ENCODE measurements at regions of chr16 and their contacts with region 1.

Region 1: DNA sequence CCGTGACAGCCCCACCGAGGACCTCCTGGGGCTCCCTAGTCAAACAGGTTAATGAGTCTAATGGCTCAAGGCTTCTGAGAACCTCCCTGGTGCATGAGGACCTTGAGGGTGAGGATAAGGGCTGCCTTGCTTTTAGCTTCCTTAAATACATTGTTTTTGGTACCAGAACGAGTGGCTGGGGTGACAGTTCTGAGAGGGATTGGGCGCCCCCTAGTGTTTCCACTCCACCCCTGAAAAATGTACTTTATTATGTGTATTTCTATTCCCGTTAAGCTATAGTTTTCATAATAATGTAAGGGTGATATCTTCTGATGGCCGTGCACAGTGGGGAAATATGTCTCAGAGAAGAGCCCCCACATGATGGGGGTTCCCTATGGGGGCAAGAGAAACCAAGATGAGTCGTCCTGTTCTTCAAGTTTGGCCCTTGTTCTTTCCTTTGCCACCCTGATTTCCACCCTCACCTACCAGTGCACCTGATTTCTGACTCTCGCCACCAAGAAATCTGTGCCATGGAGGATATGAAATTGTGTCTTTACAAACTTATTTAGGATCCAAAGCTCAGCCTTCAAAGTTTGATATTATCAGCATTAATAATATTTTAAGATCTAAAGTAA is 14.5 kb upstream of the VWA3A start:
- DNase-seq: peak; percentile 67
- CTCF ChIP-seq: peak; percentile 66

Region 2: GRCh38 chr16:21959050-21959449 is 118.8 kb before region 1 on chr16:
- CTCF ChIA-PET with region 1: interaction called, 21 read pairs
- POLR2A ChIA-PET with region 1: no interaction called
- DNase-seq: no peak
- CTCF ChIP-seq: no peak

Region 3: DNA sequence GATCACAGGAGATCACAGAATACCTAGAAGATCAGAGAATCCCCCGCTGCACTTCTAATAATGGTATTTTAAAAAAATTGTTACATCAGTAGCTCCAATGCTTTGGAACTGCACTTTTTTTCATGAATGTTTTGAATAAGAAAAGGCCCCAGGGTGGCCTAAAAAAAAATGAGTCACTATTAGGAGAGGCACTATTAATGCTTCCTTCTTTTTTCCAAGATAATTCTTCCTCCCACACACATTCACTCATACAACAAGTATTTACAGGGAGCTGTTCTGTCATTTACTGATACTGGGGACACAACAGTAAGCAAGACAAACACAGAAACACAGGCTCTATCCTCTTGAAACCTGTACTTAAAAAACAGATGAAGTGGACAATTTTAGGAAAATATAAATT is 76.2 kb before region 1 on chr16:
- CTCF ChIA-PET with region 1: interaction called, 313 read pairs
- POLR2A ChIA-PET with region 1: no interaction called
- DNase-seq: no peak
- CTCF ChIP-seq: no peak

Region 4: GRCh38 chr16:22023505-22023904 is 54.3 kb before region 1 on chr16:
- CTCF ChIA-PET with region 1: interaction called, 19 read pairs
- POLR2A ChIA-PET with region 1: no interaction called
- DNase-seq: peak; percentile 49
- CTCF ChIP-seq: no peak

Region 5: GRCh38 chr16:22063888-22064467 is 13.8 kb before region 1 on chr16:
- CTCF ChIA-PET with region 1: interaction called, 53 read pairs
- POLR2A ChIA-PET with region 1: no interaction called
- DNase-seq: no peak
- CTCF ChIP-seq: no peak

Region 6: GRCh38 chr16:22109258-22109898 is 31.6 kb after region 1 on chr16:
- CTCF ChIA-PET with region 1: interaction called, 15 read pairs
- POLR2A ChIA-PET with region 1: no interaction called
- DNase-seq: no peak
- CTCF ChIP-seq: no peak

Region 7: GRCh38 chr16:22177968-22178934 is 100.4 kb after region 1 on chr16:
- CTCF ChIA-PET with region 1: no interaction called
- POLR2A ChIA-PET with region 1: no interaction called
- DNase-seq: no peak
- CTCF ChIP-seq: no peak

Region 8: DNA sequence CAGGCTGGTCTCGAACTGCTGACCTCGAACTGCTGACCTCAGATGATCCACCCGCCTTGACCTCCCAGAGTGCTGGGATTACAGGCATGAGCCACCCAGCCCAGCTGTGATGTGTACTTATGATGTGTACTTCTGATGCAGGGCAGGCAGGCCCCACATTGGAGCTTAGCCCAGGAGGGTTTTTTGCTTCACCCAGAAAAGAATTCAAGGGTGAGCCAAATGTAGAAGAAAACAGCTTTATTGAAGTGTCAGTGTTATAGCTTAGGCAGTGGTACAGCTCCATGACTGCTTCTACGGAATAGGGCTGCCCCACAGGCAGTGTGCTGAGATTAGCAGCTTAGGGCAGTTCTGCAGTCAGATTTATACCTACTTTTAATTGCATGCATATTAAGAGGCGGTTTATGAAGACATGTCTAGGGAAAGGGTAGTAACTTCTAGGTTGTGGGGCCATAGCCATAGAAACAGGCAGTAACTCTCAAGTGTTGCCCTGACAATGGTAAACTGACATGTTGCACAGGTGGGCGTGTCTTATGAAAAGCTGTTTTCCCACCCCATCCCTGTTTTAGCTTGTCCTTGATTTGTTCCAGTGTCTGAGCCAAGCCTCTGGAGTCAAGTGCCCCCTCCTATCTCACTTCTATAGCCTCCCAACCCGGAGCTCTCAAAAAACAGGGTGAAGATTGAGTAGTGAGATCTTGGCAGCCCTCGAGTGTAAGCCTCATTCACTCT is 195.2 kb after region 1 on chr16:
- CTCF ChIA-PET with region 1: no interaction called
- POLR2A ChIA-PET with region 1: no interaction called
- DNase-seq: no peak
- CTCF ChIP-seq: no peak

Region 9: DNA sequence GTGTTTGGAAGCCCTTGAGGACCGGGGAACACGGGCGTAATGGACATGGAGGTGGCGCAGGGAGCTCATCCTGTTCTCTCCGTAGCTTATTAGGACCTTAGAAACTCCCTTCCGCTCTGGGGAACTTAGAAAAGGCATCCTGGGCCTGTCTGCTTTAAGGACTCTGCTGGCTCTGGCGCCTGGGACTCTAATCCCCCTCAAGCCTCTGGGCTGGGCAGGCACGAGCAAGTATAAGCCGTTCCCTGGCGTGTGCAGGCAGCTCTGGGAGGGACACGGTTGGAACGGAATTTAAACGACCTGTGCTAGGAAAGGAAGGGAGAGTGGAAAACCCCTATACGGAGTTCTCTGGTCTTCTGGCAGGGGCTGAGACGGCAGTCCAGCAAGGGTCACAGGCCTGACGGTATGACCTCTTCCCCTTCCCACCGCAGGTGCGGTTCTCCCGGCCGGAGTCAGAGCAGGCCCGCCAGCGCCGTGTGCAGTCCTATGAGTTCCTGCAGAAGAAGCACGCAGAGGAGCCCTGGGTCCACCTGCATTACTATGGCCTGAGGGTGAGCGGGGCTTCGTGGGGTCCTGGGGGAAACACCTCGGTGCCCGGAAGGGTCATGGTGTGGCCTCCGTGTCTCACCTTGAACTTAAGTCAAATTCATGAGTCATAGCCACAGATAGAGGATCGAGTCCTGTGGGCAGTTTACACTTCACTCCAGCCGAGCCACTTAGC is 237.0 kb after region 1 on chr16:
- CTCF ChIA-PET with region 1: no interaction called
- POLR2A ChIA-PET with region 1: no interaction called
- DNase-seq: no peak
- CTCF ChIP-seq: no peak

Measured in GM10248 (cell line).